ENCODE measurements at regions of chr5 and their contacts with region 1.

Region 1: GRCh38 chr5:14628346-14628745 is 36.2 kb upstream of the OTULIN start:
- DNase-seq: peak; percentile 67

Region 2: GRCh38 chr5:14341571-14342225 is 286.6 kb before region 1 on chr5:
- in situ Hi-C with region 1: no loop called
- DNase-seq: no peak

Region 3: DNA sequence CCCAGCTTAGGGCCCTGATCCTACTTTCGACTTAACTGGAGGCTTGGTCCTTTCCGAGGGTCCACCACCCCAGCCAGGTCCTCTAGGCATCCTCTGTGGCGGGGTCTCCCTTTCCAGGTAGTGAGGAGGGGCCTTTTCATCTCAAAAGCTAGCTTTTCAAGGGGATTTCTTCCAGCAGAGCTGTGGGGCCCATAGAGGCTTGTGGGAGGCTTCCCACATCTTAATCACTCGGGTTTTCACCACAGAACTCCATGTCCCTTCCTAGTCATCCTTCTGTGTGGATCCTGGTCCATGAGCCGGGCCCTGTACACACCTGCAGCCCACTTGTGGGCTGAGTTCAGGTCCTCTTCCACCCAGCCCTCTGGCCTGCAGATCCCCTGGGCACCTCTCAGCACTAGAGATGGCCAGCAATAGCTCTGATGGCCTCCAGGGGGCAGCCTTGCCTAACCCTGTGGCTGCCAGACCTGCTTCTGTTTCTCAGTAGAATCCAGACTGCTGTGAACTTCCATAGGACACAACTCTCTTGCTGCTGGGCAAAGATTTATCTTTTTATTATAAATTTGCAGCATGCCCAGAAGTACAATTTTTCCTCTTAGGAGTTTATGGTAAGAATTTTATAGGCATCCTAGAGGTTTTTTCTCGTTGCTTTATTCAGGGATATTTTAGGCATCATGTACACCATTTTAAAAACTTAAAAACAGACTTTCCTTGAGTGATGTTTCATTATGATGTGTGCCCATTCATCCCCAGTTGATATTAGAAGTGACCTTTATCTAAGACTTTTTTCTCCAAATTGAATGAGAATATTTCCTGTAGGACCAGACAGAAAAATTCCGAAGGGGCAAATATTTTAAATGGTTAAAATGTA is 276.3 kb before region 1 on chr5:
- in situ Hi-C with region 1: loop called (anchors 25 kb)
- DNase-seq: peak; percentile 86

Region 4: GRCh38 chr5:14954616-14955343 is 326.4 kb after region 1 on chr5:
- in situ Hi-C with region 1: no loop called
- DNase-seq: no peak

Measured in SK-MEL-5 (cell line).